Heart left ventricle (tissue), 16 donors: ENCODE measurements at regions of chr3 and their contacts with region 1.

Region 1: GRCh38 chr3:141368062-141368924 is at the start of gene ZBTB38:
- DNase-seq: peak; percentile 91 to 98 (median 93)
- ATAC-seq: peak; percentile 92 to 96 (median 95)
- H3K4me3 ChIP-seq: peak within 1 kb of the TSS; percentile 3 to 54 (median 44)
- H3K27ac ChIP-seq: peak within 1 kb of the TSS; percentile 87 to 97 (median 94)
- H3K4me1 ChIP-seq: peaks cover 12 to 64% (median 42%) of the 10 kb centered on the region in 12 donors
- H3K27me3 ChIP-seq: no peaks in the 10 kb centered on the region
- CTCF ChIP-seq: no peak
- POLR2A ChIP-seq: peak in 1 of 2 donors; percentile 88
- total RNA-seq, gene ZBTB38: 97.5 to 189 (median 128) TPM

Region 2: GRCh38 chr3:141063831-141064230 is 304.5 kb before region 1 on chr3:
- intact Hi-C with region 1: no loop called
- DNase-seq: peak in 1 of 5 donors; percentile 18
- ATAC-seq: peak in 2 of 4 donors; percentile 25 to 38
- H3K4me3 ChIP-seq: no peak overlapping the region
- H3K27ac ChIP-seq: peak overlapping the region in 4 of 12 donors; percentile 31 to 50 (median 46)
- H3K4me1 ChIP-seq: peaks cover 0 to 34% (median 7%) of the 10 kb centered on the region in 12 donors
- H3K27me3 ChIP-seq: no peaks in the 10 kb centered on the region
- CTCF ChIP-seq: no peak
- POLR2A ChIP-seq: no peak

Region 3: DNA sequence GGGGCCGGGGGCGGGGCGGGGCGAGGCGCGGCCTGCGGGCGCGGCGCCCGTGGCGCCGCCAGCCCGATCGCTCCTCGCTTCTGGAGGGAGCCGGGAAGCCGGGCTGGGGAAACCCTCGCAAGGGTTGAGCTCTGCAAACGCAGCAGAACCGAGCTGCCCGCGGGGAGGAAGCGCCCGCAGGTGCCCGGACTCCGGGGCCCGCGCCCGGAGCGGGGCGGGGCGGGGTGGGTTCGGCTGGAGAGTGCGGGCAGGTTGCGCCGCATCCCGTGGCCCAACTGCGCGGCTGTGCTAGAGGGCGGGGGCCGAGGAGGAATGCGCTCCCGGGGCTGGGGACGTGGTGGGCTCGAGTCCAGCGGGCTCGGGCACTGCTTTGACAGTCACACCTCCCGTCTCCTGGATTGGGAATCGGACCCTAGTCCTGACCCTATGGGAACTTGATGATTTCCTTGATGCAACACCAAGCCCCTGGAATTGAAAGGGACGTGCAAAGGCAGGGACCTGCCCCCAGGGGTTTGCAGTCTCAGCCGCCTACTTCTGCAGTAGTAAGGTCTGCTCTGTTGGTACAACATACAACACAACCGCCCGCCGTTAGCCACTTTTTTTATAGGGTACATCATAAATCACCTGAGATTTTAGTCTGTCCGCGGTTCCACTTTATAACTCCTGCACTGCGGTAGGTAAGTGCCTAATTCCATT is 34.3 kb after region 1 on chr3:
- intact Hi-C with region 1: loop called (anchors 1 to 5 kb)
- DNase-seq: peak; percentile 79 to 88 (median 88)
- ATAC-seq: peak; percentile 69 to 84 (median 80)
- H3K4me3 ChIP-seq: peak overlapping the region; percentile 62 to 92 (median 72)
- H3K27ac ChIP-seq: peak overlapping the region; percentile 94 to 99 (median 98)
- H3K4me1 ChIP-seq: peaks cover 8 to 81% (median 58%) of the 10 kb centered on the region in 12 donors
- H3K27me3 ChIP-seq: no peaks in the 10 kb centered on the region
- CTCF ChIP-seq: peak in 1 of 12 donors; percentile 7
- POLR2A ChIP-seq: peak in 1 of 2 donors; percentile 57

Region 4: GRCh38 chr3:141412087-141412935 is 44.0 kb after region 1 on chr3:
- intact Hi-C with region 1: loop called in 1 of 10 experiments (anchors 2 kb)
- DNase-seq: peak in 4 of 5 donors; percentile 62 to 68 (median 67)
- ATAC-seq: peak; percentile 32 to 70 (median 64)
- H3K4me3 ChIP-seq: peak overlapping the region in 10 of 12 donors; percentile 12 to 53 (median 34)
- H3K27ac ChIP-seq: peak overlapping the region; percentile 93 to 99 (median 98)
- H3K4me1 ChIP-seq: peaks cover 13 to 99% (median 90%) of the 10 kb centered on the region in 12 donors
- H3K27me3 ChIP-seq: no peaks in the 10 kb centered on the region
- CTCF ChIP-seq: no peak
- POLR2A ChIP-seq: no peak